HCT116 (cell line): ENCODE measurements at regions of chr12 and their contacts with region 1.

Region 1: GRCh38 chr12:74689929-74690328 is 152.3 kb downstream of the ATXN7L3B start:
- DNase-seq: no peak
- ATAC-seq: no peak
- H3K4me3 ChIP-seq: no peak overlapping the region
- H3K27ac ChIP-seq: no peak overlapping the region
- H3K4me1 ChIP-seq: no peaks in the 10 kb centered on the region
- H3K27me3 ChIP-seq: no peaks in the 10 kb centered on the region
- CTCF ChIP-seq: no peak
- POLR2A ChIP-seq: no peak
- RAD21 ChIP-seq: no peak

Region 2: DNA sequence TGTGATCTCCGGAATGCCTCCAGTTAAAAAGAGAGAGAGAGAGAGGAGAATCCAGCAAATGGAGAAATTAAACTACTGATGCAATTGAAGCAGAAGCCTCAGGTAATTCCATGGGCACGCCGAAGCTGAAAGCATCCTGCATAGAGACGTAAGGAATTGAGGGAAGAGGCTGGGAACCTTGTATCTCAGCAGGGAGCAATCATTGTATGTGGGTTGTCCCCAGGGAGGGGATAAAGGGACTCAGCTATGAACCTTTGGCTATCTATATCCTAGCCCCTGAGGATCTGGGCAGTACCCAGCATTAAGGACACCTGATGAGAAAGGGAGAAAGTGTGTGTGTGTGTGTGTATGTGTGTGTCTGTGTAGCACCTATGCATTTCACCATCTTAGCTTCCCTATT is 248.1 kb before region 1 on chr12:
- CTCF ChIA-PET with region 1: no interaction called
- POLR2A ChIA-PET with region 1: no interaction called
- RAD21 ChIA-PET with region 1: no interaction called
- intact Hi-C with region 1: no loop called
- DNase-seq: no peak
- ATAC-seq: no peak
- H3K4me3 ChIP-seq: no peak overlapping the region
- H3K27ac ChIP-seq: no peak overlapping the region
- H3K4me1 ChIP-seq: no peaks in the 10 kb centered on the region
- H3K27me3 ChIP-seq: no peaks in the 10 kb centered on the region
- CTCF ChIP-seq: no peak
- POLR2A ChIP-seq: no peak
- RAD21 ChIP-seq: no peak

Region 3: GRCh38 chr12:75058228-75058627 is 368.3 kb after region 1 on chr12:
- CTCF ChIA-PET with region 1: interaction called, 3 read pairs
- POLR2A ChIA-PET with region 1: no interaction called
- RAD21 ChIA-PET with region 1: no interaction called
- intact Hi-C with region 1: loop called (anchors 10 kb)
- DNase-seq: no peak
- ATAC-seq: no peak
- H3K4me3 ChIP-seq: no peak overlapping the region
- H3K27ac ChIP-seq: no peak overlapping the region
- H3K4me1 ChIP-seq: no peaks in the 10 kb centered on the region
- H3K27me3 ChIP-seq: no peaks in the 10 kb centered on the region
- CTCF ChIP-seq: peak in 1 of 3 experiments; percentile 20; a peak in 1 of 6 replicates
- POLR2A ChIP-seq: no peak
- RAD21 ChIP-seq: peak; percentile 38; the same call in 1 of the 2 replicates

Region 4: DNA sequence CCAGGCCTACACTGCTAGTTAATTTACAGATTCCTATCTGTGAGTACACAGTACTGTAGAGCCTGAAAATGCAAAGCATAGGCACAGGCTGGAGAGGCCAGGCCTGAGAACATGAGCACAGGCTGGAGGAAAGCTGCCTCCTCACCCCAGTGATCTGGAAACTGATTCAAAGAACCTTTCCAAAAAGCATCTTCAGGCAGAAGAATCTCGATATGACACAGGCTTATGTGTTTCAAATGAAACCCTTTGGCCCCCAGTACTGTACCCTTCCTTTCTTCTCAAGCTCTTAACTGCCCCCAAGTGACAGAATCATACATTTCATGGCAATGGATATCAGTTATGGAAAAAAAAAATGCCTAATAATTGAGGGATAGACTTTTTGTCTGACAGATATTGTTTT is 397.7 kb after region 1 on chr12:
- CTCF ChIA-PET with region 1: interaction called, 5 read pairs
- POLR2A ChIA-PET with region 1: no interaction called
- RAD21 ChIA-PET with region 1: no interaction called
- intact Hi-C with region 1: loop called (anchors 10 kb)
- DNase-seq: peak; percentile 13
- ATAC-seq: peak; percentile 86
- H3K4me3 ChIP-seq: no peak overlapping the region
- H3K27ac ChIP-seq: no peak overlapping the region
- H3K4me1 ChIP-seq: no peaks in the 10 kb centered on the region
- H3K27me3 ChIP-seq: no peaks in the 10 kb centered on the region
- CTCF ChIP-seq: peak; percentile 37 to 58 (median 37); a peak in 3 of 6 replicates
- POLR2A ChIP-seq: no peak
- RAD21 ChIP-seq: peak; percentile 69

Region 5: DNA sequence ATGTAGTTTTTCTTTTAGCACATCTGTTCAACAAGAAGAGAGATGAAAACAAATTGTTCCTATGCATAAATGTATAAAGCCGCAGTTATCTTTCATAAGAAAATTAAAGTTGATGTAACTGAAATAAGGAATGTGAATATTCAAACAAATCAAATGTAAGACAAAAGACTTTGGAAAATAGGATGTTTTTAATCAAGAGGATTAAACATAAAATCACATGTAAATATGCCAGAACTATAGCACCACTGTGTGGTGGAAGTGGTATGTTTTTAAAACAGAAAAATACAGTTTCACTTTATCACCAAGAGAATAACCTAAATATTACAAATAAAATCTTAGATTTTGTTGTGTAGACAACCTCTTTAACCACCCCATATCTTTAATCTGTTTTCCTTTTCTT is 599.8 kb after region 1 on chr12:
- CTCF ChIA-PET with region 1: interaction called, 3 read pairs
- POLR2A ChIA-PET with region 1: no interaction called
- RAD21 ChIA-PET with region 1: no interaction called
- intact Hi-C with region 1: loop called (anchors 5 kb)
- DNase-seq: peak; percentile 3
- ATAC-seq: no peak
- H3K4me3 ChIP-seq: no peak overlapping the region
- H3K27ac ChIP-seq: no peak overlapping the region
- H3K4me1 ChIP-seq: no peaks in the 10 kb centered on the region
- H3K27me3 ChIP-seq: no peaks in the 10 kb centered on the region
- CTCF ChIP-seq: peak; percentile 16 to 52 (median 37); a peak in 4 of 6 replicates
- POLR2A ChIP-seq: no peak
- RAD21 ChIP-seq: peak; percentile 69

Region 6: DNA sequence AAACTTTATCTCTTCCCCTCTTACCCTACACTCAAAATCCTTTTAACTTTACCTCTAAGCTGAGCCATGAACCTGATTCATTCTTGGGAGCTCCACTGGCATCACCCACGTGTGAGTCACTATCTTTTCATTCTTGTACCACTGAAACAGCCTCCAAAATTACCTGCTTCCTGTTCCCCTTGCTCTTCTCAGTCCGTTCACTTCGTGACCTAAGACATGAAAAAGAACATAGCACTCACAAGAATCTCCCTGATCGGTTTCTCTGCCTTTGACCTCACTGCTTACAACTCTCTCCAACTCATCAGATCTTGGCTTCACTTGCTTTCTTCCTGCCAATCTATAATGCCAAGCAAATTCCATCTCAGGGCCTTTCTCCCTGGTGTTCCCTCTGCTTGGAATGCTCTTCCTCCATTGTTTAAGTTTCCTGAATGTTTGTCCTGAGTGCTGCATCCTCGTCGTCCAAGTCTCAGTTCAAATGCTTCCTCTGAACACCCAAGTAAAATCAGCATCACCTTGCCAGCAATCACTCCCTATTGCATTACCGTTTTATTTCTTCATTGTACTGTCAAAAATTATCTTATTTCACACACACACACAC is 799.8 kb after region 1 on chr12:
- CTCF ChIA-PET with region 1: interaction called, 3 read pairs
- POLR2A ChIA-PET with region 1: no interaction called
- RAD21 ChIA-PET with region 1: no interaction called
- intact Hi-C with region 1: loop called (anchors 10 kb)
- DNase-seq: peak; percentile 62
- ATAC-seq: peak; percentile 64
- H3K4me3 ChIP-seq: peak overlapping the region in 1 of 2 experiments; percentile 9; a peak in 1 of 4 replicates
- H3K27ac ChIP-seq: peak overlapping the region; percentile 82
- H3K4me1 ChIP-seq: peaks cover 27 to 50% of the 10 kb centered on the region in 2 experiments
- H3K27me3 ChIP-seq: no peaks in the 10 kb centered on the region
- CTCF ChIP-seq: no peak
- POLR2A ChIP-seq: no peak
- RAD21 ChIP-seq: no peak